Right ventricle myocardium inferior (tissue), 1 donor: ENCODE measurements at regions of chr13 and their contacts with region 1.

Region 1: DNA sequence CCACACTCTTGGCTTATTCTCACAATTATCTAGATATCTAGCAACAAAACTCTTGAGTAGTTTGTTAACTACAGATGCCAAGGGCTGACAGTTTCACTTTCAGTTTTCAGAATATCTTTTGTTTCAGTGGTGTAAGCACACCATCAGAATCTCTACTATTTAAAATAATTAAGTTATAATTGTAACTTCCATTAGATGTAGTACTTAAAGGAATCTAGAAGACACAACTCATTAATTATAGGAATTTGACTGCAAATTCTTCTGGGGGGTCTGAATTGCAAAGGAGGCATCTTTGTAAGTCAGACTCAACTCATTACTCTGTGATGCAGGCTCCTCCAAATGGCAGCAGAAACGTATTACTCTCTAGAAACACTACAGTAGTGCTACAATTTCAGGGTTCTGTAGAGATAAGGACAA is 44.9 kb upstream of the USPL1 start:
- DNase-seq: no peak
- ATAC-seq: peak; percentile 68

Region 2: DNA sequence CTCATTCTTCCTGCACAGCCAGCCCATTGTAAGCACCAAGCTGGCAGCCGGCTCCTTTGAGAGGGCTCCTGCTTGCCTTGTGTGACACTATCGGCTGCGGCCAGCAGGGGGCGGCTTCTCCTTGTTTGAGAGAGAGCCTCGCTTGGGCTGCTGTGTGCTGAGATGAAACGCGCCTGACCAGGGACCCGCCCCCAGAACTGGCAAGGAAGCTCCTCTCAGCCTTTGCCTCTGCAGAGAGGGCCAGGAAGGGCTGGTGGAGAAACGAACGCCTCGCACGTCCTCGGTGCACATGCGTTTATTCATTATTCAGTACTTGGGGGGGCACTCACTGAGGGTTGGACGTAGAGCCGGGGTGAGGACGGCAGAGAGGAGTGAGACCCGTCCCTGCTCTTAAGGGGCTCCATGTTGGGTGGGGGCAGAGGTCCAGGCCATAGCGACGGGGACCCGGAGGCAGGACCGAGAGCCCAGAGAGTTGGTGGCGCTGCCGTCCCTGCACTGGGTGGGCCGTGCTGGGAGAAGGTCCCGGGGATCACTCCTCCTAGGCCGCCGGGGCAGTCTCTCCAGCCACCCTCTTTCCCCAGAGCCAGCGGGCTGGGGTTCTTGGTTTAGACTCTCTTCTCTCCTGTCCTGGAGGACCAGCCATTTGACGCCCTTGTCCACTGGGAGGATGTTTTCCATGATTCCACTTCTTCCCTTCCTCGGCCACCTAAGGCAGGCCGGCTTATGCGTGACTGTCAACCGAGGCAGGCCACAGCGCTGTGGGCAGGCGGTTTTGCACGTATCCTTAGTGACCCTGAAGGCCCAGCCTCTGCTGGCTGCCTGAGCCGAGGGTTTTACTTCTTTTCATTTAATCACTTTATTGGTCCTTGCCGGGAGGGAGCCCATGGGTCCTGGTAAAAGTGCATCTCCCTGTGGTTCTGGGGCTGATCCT is 440.0 kb before region 1 on chr13:
- intact Hi-C with region 1: loop called (anchors 10 kb)
- DNase-seq: peak; percentile 98
- ATAC-seq: peak; percentile 95

Region 3: GRCh38 chr13:30408319-30409101 is 164.4 kb before region 1 on chr13:
- intact Hi-C with region 1: loop called (anchors 5 kb)
- DNase-seq: peak; percentile 97
- ATAC-seq: peak; percentile 94

Region 4: DNA sequence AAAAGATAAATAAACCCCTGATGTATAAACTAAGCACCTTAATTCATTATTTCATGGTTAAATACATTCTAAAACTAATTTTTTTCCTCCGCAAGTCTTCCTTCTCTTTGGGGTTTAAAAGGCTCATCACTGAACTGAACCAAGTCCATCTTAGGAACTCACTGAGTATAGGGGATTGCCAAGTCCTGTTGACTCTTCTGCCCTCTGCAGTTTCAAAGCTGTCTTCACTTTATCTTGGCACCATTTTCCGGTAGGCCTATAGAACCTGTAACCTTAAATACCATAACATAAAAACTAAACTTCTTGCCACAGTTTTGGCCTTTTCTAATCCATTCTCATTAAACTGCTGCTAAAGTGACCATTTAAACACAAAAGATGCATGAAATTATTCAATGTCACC is 21.7 kb before region 1 on chr13:
- intact Hi-C with region 1: no loop called
- DNase-seq: no peak
- ATAC-seq: no peak

Region 5: GRCh38 chr13:30673669-30674521 is 101.0 kb after region 1 on chr13:
- intact Hi-C with region 1: no loop called
- DNase-seq: peak; percentile 95
- ATAC-seq: peak; percentile 95